Activated naive CD4-positive, alpha-beta T cell treated with anti-CD3 and anti-CD28 coated beads for 36 hours (primary cell): ENCODE measurements at regions of chr11 and their contacts with region 1.

Region 1: GRCh38 chr11:11672789-11673188 is 51.0 kb upstream of the GALNT18 start:
- DNase-seq: no peak
- H3K4me3 Mint-ChIP-seq: no peak overlapping the region
- H3K27ac Mint-ChIP-seq: no peak overlapping the region
- H3K4me1 Mint-ChIP-seq: no peaks in the 10 kb centered on the region
- H3K27me3 Mint-ChIP-seq: peaks cover 9% of the 10 kb centered on the region

Region 2: DNA sequence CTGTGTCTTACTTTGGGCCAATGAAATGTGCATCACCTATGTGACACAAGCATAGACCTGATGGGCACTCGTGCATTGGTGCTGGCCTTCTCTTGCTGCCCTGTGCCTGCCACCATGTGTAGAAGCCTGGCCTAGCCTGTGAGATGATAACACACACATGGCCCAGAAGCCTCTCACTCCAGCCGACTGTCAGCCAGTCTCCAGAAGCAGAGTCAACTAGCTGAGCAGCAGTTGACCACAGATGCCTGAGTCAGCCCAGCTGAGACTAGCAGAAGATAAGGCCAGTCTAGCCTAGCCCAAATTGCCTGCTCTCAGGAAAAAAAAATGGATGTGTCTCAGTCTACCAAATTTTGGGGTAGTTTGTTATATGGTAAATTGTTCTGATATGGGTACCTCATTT is 365.9 kb before region 1 on chr11:
- CTCF ChIA-PET with region 1: no interaction called
- intact Hi-C with region 1: no loop called
- DNase-seq: no peak
- H3K4me3 Mint-ChIP-seq: no peak overlapping the region
- H3K27ac Mint-ChIP-seq: no peak overlapping the region
- H3K4me1 Mint-ChIP-seq: peaks cover 6% of the 10 kb centered on the region
- H3K27me3 Mint-ChIP-seq: no peaks in the 10 kb centered on the region

Region 3: GRCh38 chr11:11621573-11622319 is 51.0 kb before region 1 on chr11 and contains the start of gene GALNT18:
- CTCF ChIA-PET with region 1: no interaction called
- intact Hi-C with region 1: loop called (anchors 10 kb)
- DNase-seq: peak; percentile 88
- H3K4me3 Mint-ChIP-seq: peak within 1 kb of the TSS; percentile 74
- H3K27ac Mint-ChIP-seq: no peak within 1 kb of the TSS
- H3K4me1 Mint-ChIP-seq: no peaks in the 10 kb centered on the region
- H3K27me3 Mint-ChIP-seq: peaks cover 48% of the 10 kb centered on the region
- total RNA-seq, gene GALNT18: 4.3 to 4.7 TPM